ENCODE measurements at regions of chr17 and their contacts with region 1.

Region 1: DNA sequence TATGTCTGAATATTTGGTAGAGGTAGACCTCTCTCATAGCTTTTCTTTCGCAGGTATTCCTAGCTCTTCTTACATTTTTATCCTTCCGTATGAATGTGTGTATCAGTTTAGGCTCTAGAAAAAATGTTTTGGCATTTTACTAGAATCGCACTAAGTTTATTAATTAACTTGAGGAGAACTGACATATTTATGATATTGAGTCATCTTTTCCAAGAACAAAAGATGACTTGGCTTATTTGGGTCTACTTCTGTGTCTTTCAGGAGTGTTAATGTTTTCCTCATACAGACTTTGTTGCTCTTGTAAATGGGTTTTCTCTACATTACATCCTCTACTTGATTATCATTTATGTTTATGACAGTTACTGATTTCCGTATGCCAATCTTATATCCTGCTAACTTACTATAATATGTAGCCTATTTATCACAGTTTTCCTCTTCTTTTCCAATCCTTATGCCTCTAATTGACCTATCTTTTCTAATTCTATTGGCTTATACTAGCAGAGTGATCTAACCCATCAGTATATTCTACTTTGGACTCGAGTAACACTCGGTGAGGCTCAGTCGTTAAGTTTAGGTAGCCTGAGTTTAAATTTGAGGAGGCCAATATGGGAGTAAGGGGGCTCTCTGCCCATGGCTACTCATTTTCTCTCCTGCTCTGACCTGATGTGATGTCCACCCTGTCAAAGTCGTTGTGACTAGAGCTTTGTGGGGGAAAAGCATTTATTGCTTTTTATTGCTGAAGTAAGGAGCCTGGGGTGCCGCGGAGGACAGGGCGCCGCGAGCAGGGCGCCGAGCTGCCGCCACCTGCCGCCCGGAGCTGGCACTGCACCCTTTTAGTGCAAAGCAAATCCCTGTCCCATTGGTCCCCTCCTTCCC is 20.0 kb downstream of the ST6GALNAC1 start:
- DNase-seq: peak; percentile 79
- H3K4me3 Mint-ChIP-seq: no peak overlapping the region
- H3K27ac Mint-ChIP-seq: no peak overlapping the region
- H3K4me1 Mint-ChIP-seq: peaks cover 7% of the 10 kb centered on the region
- H3K27me3 Mint-ChIP-seq: peaks cover 15% of the 10 kb centered on the region

Region 2: GRCh38 chr17:76567634-76568432 is 55.7 kb before region 1 on chr17:
- CTCF ChIA-PET with region 1: interaction called, 82 read pairs
- POLR2A ChIA-PET with region 1: no interaction called
- DNase-seq: no peak
- H3K4me3 Mint-ChIP-seq: no peak overlapping the region
- H3K27ac Mint-ChIP-seq: no peak overlapping the region
- H3K4me1 Mint-ChIP-seq: peaks cover 14% of the 10 kb centered on the region
- H3K27me3 Mint-ChIP-seq: no peaks in the 10 kb centered on the region

Region 3: DNA sequence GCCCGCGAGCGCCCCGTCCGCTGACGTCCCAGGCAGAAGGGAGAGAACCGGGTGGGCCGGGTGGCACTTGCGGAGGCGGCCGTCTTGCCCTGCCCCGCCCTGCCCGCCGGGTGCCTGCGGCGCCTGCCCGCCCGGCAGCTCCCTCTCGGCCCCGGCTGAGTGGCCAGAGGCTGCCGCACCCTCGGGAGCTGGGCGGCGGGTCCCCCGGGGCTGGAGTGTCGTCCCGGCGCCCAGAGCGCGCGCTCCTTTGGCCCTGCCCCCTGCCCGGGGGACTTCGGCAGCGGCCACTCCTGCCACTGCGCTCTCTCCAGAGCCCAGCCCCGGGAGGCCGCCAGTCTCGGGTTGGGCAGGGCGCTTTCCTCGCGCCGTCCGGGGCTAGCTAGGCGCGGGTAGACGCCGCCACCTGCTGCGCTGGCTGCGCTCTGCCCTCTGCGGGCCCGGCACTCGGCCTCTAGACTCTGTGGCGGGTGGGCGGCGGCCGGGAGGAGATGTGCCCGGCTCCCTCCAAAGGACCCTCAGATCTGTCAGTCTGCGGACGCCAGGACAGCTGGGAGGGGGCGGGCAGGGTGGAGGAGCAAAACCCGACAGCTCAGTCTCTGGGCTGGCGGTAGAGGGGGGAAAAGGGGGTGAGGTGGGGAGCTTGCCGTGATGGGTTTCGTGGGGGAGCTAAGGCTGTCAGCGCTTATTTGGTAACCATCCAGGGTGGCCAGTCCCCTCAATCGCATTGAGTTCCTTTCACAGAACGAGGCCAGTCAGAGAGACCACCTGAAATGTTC is 37.5 kb before region 1 on chr17 and contains the start of gene ST6GALNAC2:
- CTCF ChIA-PET with region 1: interaction called, 21 read pairs
- POLR2A ChIA-PET with region 1: no interaction called
- DNase-seq: peak; percentile 53
- H3K4me3 Mint-ChIP-seq: peak within 1 kb of the TSS; percentile 65
- H3K27ac Mint-ChIP-seq: no peak within 1 kb of the TSS
- H3K4me1 Mint-ChIP-seq: peaks cover 16% of the 10 kb centered on the region
- H3K27me3 Mint-ChIP-seq: peaks cover 58% of the 10 kb centered on the region
- total RNA-seq, gene ST6GALNAC2: 0.25 to 0.65 TPM

Region 4: DNA sequence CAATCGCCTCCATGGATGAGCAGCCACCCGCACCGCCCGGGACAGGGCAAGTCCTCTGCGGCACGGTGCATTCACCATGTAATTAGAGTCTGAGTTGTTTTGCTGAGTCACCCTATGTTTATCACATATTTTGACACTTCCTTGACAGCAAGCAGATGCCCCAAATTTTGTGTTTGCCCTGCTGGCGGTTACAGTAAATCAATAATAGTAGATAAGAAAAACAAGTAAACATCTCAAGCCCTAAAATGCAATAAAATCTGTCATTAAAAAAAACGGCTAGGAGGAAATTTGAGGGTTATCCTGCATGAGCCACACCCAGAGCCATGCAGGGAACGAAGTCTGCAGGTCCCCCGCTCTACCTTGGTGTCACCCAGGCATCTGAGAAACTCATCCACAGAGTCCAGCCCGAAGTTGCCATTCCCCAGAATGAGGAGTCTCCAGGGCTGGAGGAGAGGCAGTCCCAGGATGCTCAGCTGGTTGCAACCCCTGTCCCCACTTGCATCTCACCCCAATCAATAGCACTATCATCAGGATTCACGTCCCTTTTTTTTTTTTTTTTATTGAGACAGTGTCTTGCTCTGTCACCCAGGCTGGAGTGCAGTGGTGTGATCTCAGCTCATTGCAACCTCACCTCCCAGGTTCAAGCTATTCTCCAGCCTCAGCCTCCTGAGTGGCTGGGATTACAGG is 36.6 kb after region 1 on chr17:
- CTCF ChIA-PET with region 1: interaction called, 22 read pairs
- POLR2A ChIA-PET with region 1: interaction called, 3 read pairs
- DNase-seq: peak; percentile 48
- H3K4me3 Mint-ChIP-seq: peak overlapping the region; percentile 38
- H3K27ac Mint-ChIP-seq: peak overlapping the region; percentile 86
- H3K4me1 Mint-ChIP-seq: peaks cover 32% of the 10 kb centered on the region
- H3K27me3 Mint-ChIP-seq: peaks cover 11% of the 10 kb centered on the region

Region 5: DNA sequence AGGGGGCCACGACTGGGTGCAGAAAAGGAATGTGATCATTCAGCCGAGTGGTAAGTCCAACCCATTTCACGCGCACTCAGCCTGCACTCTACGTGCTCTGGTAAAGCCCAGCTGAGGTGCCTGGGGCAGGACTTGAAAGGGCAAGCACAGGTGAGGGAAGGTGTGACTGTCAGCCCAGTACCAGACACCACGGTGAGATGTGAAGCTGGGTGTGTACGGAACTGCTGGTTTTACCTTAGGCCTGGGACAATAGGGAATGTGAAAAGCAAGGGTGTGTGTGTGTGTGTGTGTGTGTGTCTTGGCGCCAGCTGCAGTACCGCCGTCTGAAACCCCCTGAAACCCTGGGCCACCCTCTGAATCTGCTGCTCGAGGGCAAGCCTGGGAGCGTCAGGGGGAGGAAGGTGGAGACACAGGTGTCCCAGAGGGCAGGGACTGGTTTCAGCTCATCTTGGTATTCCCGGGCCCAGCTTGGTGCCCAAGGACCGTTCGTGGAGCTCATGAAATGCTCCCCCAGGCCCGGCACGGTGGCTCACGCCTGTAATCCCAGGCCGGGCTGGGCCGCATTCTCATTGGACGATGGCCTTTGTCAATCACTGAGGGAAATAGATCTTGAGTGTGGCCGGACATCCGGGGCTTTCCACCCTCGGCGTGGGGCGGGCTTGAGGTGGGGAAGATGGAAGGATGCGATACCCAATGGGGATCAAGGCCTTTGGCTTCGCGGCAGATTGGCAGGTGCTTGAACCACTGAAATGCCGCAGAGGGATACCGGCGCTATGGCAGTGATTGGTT is 47.8 kb after region 1 on chr17:
- CTCF ChIA-PET with region 1: interaction called, 11 read pairs
- POLR2A ChIA-PET with region 1: interaction called, 4 read pairs
- DNase-seq: peak; percentile 100
- H3K4me3 Mint-ChIP-seq: peak overlapping the region; percentile 89
- H3K27ac Mint-ChIP-seq: peak overlapping the region; percentile 87
- H3K4me1 Mint-ChIP-seq: peaks cover 31% of the 10 kb centered on the region
- H3K27me3 Mint-ChIP-seq: peaks cover 12% of the 10 kb centered on the region

Region 6: DNA sequence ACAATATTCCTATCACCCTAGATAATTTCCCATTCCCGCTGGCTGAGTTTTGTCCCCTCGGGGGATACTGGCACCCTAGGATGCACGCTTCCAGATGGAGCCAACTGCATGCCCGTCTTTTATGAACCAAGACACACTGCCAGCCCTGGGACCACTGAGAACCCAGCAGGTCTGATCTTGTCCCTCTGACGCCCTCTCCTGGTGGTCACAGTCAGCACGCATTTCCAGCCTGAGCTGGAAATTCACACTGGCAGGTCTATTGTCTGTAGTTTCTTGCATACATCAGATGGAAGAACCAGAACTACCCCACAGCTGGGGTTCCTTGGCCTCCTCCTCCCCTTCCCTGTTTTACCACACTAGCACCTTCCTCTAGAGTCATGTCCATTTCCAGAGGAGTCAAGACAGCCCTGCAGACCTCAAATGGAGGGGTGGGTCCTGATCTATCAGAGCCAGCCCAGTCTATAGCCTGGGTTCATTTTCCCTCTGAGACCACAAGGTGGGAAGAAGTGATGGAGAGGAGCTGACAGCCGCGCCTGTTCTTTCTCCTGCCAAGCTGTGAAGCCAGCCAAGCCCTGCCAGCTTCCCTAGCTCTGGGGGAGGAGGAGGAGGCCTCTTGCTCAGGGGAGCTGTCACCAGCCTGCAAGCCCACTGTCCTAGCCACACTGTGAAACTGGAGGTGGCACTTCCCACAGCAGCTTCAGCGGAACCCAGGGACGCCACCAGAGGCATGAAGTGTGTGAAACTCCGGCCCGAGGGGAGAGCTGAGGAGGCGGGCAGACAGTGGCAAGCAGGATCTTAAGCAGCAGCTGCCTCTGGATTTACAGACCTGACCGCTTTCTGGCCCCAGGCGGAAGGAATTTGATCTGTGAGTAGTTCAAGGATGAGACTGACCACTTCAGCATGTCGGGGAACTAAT is 58.0 kb after region 1 on chr17:
- CTCF ChIA-PET with region 1: interaction called, 19 read pairs
- POLR2A ChIA-PET with region 1: interaction called, 5 read pairs
- DNase-seq: peak; percentile 79
- H3K4me3 Mint-ChIP-seq: no peak overlapping the region
- H3K27ac Mint-ChIP-seq: no peak overlapping the region
- H3K4me1 Mint-ChIP-seq: peaks cover 8% of the 10 kb centered on the region
- H3K27me3 Mint-ChIP-seq: peaks cover 6% of the 10 kb centered on the region

Region 7: DNA sequence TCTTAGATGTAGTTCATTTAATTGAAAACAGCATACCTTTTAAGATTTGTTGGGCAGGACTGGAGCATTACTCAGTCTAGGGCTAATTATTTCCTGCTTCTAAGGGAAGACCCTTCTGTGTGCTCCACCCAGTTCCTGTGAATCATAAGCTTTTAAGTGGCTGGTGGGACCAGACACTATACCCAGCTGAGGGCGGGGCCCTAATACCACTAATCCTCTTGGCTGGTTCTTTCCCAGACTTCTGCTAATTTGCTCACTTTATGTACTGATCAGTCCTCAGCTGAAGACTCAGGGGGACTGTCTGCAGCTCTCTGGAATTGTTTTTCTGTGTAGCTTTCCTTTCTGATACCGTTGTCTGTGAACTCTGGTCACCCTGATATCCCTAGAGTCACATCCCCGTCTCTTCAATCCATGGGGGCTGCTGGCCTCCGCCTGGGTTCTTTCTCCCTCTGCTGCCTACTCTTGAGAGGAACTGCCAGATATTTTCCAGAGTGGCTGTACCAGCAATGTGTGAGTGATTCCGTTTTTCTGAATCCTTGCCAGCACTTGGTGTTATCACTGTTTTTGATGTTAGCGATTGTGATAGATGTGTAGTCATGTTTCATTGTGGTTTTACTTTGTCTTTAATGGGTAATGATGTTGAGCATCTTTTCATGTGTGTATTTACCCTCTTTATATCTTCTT is 149.5 kb after region 1 on chr17:
- CTCF ChIA-PET with region 1: no interaction called
- POLR2A ChIA-PET with region 1: no interaction called
- DNase-seq: peak; percentile 56
- H3K4me3 Mint-ChIP-seq: peak overlapping the region; percentile 78
- H3K27ac Mint-ChIP-seq: peak overlapping the region; percentile 90
- H3K4me1 Mint-ChIP-seq: peaks cover 30% of the 10 kb centered on the region
- H3K27me3 Mint-ChIP-seq: no peaks in the 10 kb centered on the region